ENCODE measurements at regions of chr11 and their contacts with region 1.

Region 1: GRCh38 chr11:78228467-78228866 is 39.7 kb downstream of the USP35 start:
- DNase-seq: no peak
- ATAC-seq: peak; percentile 54
- H3K4me3 ChIP-seq: no peak overlapping the region
- H3K27ac ChIP-seq: no peak overlapping the region
- H3K4me1 ChIP-seq: peaks cover 3 to 6% of the 10 kb centered on the region in 2 donors
- H3K27me3 ChIP-seq: no peaks in the 10 kb centered on the region

Region 2: DNA sequence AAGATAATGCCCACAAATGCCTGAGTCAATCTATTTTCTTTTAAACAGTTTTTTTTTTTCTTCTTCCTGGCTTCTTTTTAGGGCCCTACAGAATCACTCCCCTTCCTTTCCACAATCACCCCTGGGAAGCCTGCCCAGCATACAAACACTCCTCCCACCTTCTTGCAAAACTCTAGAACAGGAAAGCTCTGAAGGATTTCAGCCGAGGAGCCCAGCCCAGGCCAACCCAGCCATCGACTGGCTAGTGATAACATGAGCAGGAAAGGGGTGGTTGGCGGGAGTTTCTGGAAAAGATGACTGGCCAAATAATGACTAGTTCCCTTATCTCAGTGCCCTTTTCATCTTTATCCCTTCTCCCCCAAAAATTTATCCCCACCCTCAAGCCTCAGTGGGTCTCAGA is 28.5 kb after region 1 on chr11:
- intact Hi-C with region 1: loop called in 1 of 2 experiments (anchors 2 kb)
- DNase-seq: peak; percentile 92 to 93
- ATAC-seq: peak; percentile 93
- H3K4me3 ChIP-seq: no peak overlapping the region
- H3K27ac ChIP-seq: peak overlapping the region; percentile 37 to 64
- H3K4me1 ChIP-seq: peaks cover 2 to 15% of the 10 kb centered on the region in 2 donors
- H3K27me3 ChIP-seq: no peaks in the 10 kb centered on the region

Region 3: DNA sequence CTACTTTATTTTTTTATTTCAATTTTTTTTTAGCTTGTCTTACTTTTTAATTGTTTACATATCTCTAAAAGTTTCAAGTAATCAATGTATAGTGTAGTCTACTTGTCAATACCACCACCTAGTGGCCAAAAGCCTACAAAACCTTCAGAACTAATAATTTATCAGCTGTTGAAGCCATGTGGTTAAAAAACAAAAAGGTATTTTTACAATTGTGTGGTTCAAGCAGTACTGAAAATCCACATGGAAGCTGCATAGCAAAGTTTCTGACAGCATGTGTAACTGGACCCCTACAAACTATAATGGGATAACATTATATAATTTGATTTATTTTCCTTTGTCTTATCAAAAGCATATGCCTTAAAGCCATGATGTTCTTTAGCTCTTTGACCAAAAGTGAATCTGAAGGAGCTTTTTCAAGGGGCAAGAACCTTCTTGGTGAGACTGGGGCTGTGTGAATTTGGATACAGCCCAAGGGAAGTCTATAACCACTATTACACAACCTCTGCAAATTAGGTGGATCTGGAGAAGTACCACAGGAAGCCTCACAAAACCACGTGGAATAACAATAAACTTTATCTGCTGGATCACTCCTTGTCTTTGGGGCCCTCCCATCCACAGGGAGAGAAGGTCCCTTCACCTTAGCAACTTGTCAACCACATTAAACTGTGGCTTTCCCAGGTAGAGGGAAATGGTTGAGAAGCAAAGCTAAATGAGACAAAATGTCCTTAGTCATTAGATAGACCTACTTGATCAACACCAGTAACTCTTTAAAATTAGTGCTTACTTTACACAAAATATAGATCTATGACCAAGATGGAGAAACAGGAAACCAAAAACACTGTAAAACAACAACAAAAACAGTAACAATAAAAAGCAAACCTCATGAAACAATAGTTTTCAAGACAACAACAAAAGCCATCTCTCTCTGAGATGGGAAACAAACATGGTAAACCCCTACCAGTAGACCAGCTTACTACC is 336.3 kb after region 1 on chr11:
- intact Hi-C with region 1: loop called (anchors 2 to 5 kb)
- DNase-seq: no peak
- ATAC-seq: peak; percentile 80
- H3K4me3 ChIP-seq: no peak overlapping the region
- H3K27ac ChIP-seq: no peak overlapping the region
- H3K4me1 ChIP-seq: peaks cover 3 to 4% of the 10 kb centered on the region in 2 donors
- H3K27me3 ChIP-seq: no peaks in the 10 kb centered on the region

Measured in aorta (tissue), 5 donors.